Activated T-helper 2 cell treated with anti-CD3 and anti-CD28 coated beads, Interferon-gamma antibody, Interleukin-2, Interleukin-4, amounts not matched to agents 10 μg/mL and 5 μg/mL and 100 μg/mL, durations not matched to agents 14 hours and 24 hours and 36 hours (primary cell): ENCODE measurements at regions of chr15 and their contacts with region 1.

Region 1: GRCh38 chr15:42495361-42496212 is at the start of gene SNAP23:
- DNase-seq: peak; percentile 83
- H3K4me3 Mint-ChIP-seq: peak within 1 kb of the TSS; percentile 99
- H3K27ac Mint-ChIP-seq: peak within 1 kb of the TSS; percentile 94
- H3K4me1 Mint-ChIP-seq: peaks cover 56% of the 10 kb centered on the region
- H3K27me3 Mint-ChIP-seq: no peaks in the 10 kb centered on the region
- total RNA-seq, gene SNAP23: 78.0 and 78.9 TPM in 2 replicates

Region 2: DNA sequence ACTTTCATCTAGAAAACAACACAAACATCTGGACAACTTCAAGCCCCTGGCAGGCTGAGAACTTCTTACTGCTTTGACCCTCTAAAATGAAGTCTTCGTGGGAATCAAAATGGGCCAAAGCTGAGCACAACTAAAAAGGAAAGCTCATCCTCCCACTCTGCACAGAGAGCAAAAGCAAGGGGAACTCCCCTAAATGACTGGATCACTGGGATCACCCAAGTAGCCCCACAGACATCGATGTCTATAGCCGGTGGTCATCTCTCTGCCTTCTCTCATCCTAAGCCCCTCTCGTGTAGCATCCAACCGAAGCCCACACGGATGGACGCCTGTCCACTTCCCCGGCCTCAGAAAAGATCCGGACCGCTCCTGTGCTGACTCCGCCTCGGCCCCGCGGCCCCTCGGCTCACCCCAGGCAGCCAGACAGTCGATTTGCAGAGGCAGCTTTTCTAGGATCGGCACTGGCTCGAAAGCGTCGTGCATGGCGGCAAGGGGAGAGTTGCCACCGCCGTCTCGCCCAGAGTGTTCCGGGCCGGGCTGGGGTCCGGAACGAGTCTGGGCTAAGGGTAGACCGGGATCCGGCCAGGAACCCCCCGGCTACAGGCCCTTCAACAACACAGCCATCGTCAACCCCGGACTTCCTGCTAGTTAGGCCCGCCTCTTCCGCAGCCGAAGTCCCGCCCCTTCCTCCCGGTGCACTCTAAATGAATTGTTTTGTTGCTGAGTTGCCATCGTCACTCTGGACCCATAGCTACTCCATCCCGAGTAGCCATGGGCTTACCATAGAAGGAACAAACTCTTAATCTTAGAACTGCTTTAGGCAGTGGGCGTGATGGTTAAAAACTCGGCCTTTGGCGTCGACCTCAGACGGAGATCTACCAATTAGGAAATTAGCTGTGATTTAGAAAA is 287.7 kb before region 1 on chr15 and contains the start of gene VPS39:
- intact Hi-C with region 1: loop called (anchors 10 kb)
- DNase-seq: peak; percentile 81
- H3K4me3 Mint-ChIP-seq: peak within 1 kb of the TSS; percentile 98
- H3K27ac Mint-ChIP-seq: peak within 1 kb of the TSS; percentile 98
- H3K4me1 Mint-ChIP-seq: peaks cover 29% of the 10 kb centered on the region
- H3K27me3 Mint-ChIP-seq: no peaks in the 10 kb centered on the region
- total RNA-seq, gene VPS39: 67.7 and 70.6 TPM in 2 replicates

Region 3: DNA sequence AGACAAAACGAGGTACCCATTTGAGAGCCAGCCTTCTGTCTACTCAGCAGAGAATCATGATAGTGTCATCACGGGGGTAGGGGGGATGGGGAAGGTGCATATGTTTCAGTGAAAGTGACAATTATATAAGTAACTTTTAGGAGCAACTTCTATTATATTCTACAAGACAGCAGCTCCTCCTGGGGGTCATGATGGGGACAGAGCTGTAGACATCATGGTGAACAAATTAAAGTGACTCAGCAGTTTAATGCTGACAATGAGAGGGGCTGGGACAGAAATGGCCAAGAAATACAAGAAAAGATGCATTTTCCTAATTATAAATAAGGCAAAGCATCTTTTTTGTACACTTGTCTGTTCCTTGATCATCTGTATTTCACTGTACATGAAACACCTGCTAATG is 124.5 kb before region 1 on chr15:
- intact Hi-C with region 1: no loop called
- DNase-seq: no peak
- H3K4me3 Mint-ChIP-seq: no peak overlapping the region
- H3K27ac Mint-ChIP-seq: no peak overlapping the region
- H3K4me1 Mint-ChIP-seq: no peaks in the 10 kb centered on the region
- H3K27me3 Mint-ChIP-seq: no peaks in the 10 kb centered on the region

Region 4: DNA sequence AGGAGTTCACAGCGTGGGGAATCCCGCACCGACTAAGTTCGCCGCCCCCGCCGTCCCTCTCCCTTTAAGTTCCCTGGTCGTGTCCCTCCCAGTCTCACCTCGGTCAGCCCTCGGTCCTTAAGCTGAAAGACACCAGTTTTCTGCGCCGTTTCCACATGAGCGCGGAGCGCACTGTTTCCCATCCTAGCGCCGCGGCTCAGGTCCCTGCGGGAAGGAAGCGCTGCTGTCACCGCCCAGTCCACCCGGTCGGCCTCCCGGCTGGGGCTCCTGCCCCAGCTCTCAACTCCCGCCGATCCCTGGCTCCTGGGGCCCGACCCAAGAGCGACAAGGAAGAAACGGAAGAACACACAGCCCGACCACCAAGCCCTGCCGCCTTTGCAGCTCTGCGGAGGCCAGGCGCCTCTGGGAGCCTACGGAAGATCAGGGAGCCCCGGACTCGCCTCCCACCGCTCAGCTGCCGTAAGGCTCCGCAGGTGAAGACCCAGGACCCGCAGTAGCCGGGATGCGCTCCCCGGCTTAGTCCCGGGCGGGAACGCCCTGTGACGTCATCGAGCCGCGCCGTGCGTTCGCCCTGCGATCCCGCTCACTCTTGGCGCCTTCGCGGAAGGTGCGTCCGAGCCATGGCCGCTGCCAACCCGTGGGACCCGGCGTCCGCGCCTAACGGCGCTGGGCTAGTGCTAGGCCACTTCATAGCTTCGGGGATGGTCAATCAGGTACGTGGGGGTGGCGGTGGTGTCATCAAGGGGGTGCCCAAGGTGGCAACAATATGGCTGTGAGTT is 52.9 kb after region 1 on chr15 and contains the starts of genes HAUS2 and LRRC57:
- intact Hi-C with region 1: loop called (anchors 2 kb)
- DNase-seq: peak; percentile 84
- H3K4me3 Mint-ChIP-seq: peak within 1 kb of the TSS; percentile 92
- H3K27ac Mint-ChIP-seq: peak within 1 kb of the TSS; percentile 92
- H3K4me1 Mint-ChIP-seq: peaks cover 36% of the 10 kb centered on the region
- H3K27me3 Mint-ChIP-seq: no peaks in the 10 kb centered on the region
- total RNA-seq, gene HAUS2: 42.9 and 45.5 TPM in 2 replicates
- total RNA-seq, gene LRRC57: 21.0 and 22.5 TPM in 2 replicates